ENCODE measurements at regions of chr9 and their contacts with region 1.

Region 1: DNA sequence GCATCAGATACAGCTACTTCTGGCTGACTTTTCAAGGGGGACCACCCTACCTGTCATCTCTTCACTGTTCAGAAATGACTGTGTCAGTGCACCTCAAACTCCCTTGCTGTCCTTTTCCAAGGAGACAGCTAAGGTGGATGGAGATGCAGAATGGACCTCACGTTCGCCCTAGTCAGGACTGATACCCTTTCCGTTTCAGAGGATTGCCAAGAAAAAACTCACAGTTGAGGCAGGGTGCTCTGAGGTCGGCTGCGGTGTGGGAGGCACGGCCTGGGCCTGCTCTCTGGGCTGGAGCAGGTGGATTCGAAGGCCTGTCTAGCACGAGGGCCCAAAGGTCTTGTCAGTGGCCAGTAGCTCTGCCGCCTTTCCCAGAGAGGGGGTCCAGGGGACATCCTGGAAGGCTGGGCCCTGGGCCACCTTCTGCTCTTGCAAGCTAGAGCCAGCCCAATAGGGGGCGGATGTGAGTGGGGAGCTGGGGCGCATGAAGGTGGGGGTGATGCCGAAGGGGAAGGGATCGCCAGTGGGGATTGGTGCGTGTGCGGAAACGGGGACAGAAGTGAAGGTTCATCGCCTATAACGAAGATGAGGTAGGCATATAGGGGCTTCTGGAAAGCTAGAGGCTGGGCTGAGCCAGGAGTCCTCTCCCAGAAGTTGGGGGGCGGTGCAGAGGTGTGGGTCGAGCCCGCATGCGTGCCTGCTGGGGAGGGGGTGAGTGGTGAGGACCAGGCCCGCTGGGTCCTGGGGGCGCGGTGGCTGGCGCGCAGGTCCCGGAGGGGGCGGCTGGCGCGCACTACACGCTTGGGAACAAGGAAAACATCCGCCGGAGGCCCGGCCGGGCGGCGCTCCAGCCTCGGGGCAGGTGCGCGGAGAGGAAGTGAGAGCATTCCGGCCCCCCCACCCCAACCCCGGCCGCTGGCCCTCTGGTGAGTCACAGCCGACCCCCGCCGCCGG is 2.5 kb upstream of the MSMP start:
- DNase-seq: peak; percentile 91
- H3K4me3 ChIP-seq: peak overlapping the region; percentile 74
- H3K27ac ChIP-seq: peak overlapping the region; percentile 94
- H3K4me1 ChIP-seq: peaks cover 66% of the 10 kb centered on the region
- CTCF ChIP-seq: peak; percentile 84

Region 2: DNA sequence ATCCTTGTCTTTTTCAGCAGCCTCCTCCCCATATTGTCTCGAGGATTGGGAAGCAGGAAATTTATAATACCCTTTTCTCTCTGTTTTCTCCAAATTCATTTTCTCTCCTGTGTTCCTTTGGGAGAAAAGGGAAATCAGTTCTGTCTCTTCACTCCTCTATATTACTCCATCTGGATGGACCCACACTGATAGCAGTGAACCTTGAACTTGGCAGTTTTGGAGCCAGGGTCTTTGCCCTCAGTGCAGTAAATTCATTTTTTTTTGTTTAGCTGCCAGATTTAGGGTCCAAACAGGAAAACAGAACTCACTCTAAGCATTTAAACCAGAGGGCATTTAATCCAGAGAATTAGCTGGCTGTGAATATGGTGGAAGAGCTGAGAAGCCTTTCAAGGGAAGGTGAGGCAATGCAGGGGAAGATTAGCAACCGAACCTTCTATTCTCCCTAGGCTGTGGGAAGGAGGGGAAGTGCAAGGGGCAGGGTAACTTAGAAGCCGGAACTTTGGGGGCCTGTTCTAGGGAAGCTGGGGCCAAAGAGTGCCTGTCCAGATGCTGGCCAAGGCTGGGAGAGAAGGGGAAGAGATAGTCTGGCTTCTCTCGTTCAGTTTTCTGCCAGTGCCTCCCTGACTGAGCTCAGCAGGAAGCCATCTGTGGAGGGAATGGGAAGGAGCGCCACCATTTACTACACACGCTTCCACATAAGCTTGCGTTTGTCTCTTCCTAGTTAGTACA is 18.5 kb after region 1 on chr9:
- CTCF ChIA-PET with region 1: interaction called, 4 read pairs
- POLR2A ChIA-PET with region 1: interaction called, 12 read pairs
- intact Hi-C with region 1: loop called (anchors 1 kb)
- DNase-seq: peak; percentile 41
- H3K4me3 ChIP-seq: peak overlapping the region; percentile 39
- H3K27ac ChIP-seq: peak overlapping the region; percentile 89
- H3K4me1 ChIP-seq: peaks cover 65% of the 10 kb centered on the region
- CTCF ChIP-seq: 0 out of 2 replicates have a peak, but pooled peaks have one; percentile 24

Region 3: GRCh38 chr9:35864695-35865255 is 108.2 kb after region 1 on chr9:
- CTCF ChIA-PET with region 1: interaction called, 11 read pairs
- POLR2A ChIA-PET with region 1: no interaction called
- intact Hi-C with region 1: no loop called
- DNase-seq: no peak
- H3K4me3 ChIP-seq: no peak overlapping the region
- H3K27ac ChIP-seq: no peak overlapping the region
- H3K4me1 ChIP-seq: no peaks in the 10 kb centered on the region
- CTCF ChIP-seq: no peak